Esophagus muscularis mucosa (tissue), 4 donors: ENCODE measurements at regions of chr11 and their contacts with region 1.

Region 1: DNA sequence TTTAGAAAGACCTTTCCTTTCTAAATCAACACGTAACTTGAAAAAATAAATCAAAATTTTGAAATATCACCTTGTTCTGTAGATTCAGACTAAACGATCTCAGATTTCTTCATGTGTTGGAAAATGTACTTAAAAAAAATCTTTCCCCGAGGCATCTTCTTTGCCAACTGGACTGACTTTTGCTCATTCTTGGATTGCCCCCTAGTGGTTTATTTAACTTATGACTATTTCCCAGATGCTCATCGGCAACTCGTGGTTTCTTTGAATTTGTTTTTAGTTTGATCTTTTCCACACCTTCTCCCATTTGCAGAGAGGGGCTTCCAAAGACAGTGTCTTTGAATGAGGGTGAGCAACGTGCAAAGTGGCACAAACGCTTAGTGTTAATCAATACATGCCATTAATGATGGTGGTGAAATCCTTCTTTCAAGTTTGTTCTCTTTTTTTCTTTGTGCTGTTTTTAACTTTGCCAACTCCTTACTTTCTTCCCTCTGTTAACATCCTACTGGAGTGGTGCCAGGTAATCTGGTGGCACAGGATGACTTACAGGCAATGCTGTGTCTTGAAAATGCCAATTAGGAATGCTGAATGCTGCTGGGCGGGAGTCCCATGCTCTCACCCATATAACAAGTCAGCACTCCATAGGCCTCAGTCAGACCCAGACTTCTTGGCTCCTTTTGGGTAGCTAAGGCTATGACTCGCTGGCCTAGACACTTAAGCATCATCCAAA is 18.3 kb downstream of the PRSS23 start:
- DNase-seq: no peak
- H3K4me3 ChIP-seq: no peak overlapping the region
- H3K27ac ChIP-seq: no peak overlapping the region
- H3K4me1 ChIP-seq: peaks cover 7 to 50% (median 45%) of the 10 kb centered on the region in 4 donors
- H3K27me3 ChIP-seq: no peaks in the 10 kb centered on the region
- CTCF ChIP-seq: peak; percentile 71 to 86 (median 82)
- EP300 ChIP-seq: no peak
- POLR2A ChIP-seq: no peak

Region 2: DNA sequence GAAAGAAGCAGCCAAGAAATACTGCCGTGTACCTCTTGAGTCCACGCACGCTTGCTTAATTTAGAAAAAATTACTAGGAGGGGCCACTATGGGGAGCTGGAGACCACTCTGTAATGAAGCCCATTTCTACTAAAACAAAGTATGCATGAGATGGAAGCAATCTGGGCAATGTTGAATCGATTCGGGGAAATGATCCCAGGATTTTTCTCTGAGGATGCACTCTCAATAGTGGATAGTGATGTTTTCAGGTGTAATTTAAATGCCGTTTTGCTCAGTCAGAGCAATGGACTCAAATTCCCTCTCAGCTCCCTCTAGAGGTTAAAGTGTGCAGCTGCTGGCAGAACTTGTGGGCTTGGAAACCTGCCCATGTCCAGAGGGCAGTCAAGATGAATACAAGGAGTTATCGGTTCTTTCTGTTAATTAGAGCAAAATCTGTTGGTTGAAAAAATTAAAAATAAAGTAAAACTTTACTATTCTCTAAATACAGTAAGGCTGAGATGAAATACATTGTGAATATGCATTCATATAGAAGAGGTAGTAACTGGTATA is 210.3 kb before region 1 on chr11:
- intact Hi-C with region 1: loop called (anchors 5 kb)
- DNase-seq: peak; percentile 92
- H3K4me3 ChIP-seq: peak overlapping the region in 3 of 4 donors; percentile 21 to 33 (median 25)
- H3K27ac ChIP-seq: peak overlapping the region; percentile 1 to 69 (median 30)
- H3K4me1 ChIP-seq: peaks cover 25 to 48% (median 40%) of the 10 kb centered on the region in 4 donors
- H3K27me3 ChIP-seq: no peaks in the 10 kb centered on the region
- CTCF ChIP-seq: peak; percentile 87 to 92 (median 91)
- EP300 ChIP-seq: no peak
- POLR2A ChIP-seq: no peak

Region 3: GRCh38 chr11:86620891-86621521 is 197.6 kb before region 1 on chr11:
- intact Hi-C with region 1: no loop called
- DNase-seq: no peak
- H3K4me3 ChIP-seq: no peak overlapping the region
- H3K27ac ChIP-seq: peak overlapping the region; percentile 42 to 73 (median 70)
- H3K4me1 ChIP-seq: peaks cover 27 to 68% (median 62%) of the 10 kb centered on the region in 4 donors
- H3K27me3 ChIP-seq: no peaks in the 10 kb centered on the region
- CTCF ChIP-seq: no peak
- EP300 ChIP-seq: no peak
- POLR2A ChIP-seq: no peak

Region 4: DNA sequence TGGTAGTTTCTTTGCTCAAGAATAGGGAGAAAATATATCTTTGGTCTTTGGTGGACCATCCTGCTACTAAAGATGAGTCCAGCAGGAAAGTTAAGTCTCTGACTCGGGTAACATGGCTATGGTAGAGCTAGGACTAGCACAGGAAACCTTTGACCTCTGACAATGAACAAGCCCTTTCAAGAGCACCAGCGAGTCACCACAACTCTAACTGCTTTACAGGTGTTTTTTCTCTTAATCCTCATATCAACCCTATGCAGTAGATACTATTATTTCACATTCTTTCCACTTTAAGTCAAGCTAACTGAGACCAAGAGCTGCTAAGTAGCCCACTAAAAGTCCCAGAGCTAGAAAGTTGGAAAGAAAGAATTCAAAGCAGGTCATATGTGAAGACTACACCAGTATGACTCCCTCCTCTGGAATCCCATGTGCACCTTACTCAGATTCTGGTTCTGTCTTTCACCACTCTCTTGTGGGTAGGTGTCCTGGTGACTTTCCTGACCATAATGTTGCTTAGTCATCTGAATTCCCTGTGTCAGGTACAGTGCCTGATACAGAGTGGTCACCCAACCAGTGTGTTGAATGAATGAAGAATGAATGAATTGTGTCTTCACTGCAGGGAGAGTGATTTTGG is 92.4 kb before region 1 on chr11:
- intact Hi-C with region 1: no loop called
- DNase-seq: no peak
- H3K4me3 ChIP-seq: no peak overlapping the region
- H3K27ac ChIP-seq: no peak overlapping the region
- H3K4me1 ChIP-seq: no peaks in the 10 kb centered on the region
- H3K27me3 ChIP-seq: no peaks in the 10 kb centered on the region
- CTCF ChIP-seq: no peak
- EP300 ChIP-seq: no peak
- POLR2A ChIP-seq: no peak

Region 5: GRCh38 chr11:87137711-87138110 is 319.1 kb after region 1 on chr11:
- intact Hi-C with region 1: no loop called
- DNase-seq: no peak
- H3K4me3 ChIP-seq: no peak overlapping the region
- H3K27ac ChIP-seq: no peak overlapping the region
- H3K4me1 ChIP-seq: peaks cover 0 to 5% (median 0%) of the 10 kb centered on the region in 4 donors
- H3K27me3 ChIP-seq: no peaks in the 10 kb centered on the region
- CTCF ChIP-seq: no peak
- EP300 ChIP-seq: no peak
- POLR2A ChIP-seq: no peak